ENCODE measurements at regions of chr11 and their contacts with region 1.

Region 1: GRCh38 chr11:10413268-10413667 is 41.8 kb upstream of the AMPD3 start:
- DNase-seq: peak; percentile 54
- H3K4me3 Mint-ChIP-seq: no peak overlapping the region
- H3K27ac Mint-ChIP-seq: no peak overlapping the region
- H3K4me1 Mint-ChIP-seq: peaks cover 31% of the 10 kb centered on the region
- H3K27me3 Mint-ChIP-seq: no peaks in the 10 kb centered on the region

Region 2: DNA sequence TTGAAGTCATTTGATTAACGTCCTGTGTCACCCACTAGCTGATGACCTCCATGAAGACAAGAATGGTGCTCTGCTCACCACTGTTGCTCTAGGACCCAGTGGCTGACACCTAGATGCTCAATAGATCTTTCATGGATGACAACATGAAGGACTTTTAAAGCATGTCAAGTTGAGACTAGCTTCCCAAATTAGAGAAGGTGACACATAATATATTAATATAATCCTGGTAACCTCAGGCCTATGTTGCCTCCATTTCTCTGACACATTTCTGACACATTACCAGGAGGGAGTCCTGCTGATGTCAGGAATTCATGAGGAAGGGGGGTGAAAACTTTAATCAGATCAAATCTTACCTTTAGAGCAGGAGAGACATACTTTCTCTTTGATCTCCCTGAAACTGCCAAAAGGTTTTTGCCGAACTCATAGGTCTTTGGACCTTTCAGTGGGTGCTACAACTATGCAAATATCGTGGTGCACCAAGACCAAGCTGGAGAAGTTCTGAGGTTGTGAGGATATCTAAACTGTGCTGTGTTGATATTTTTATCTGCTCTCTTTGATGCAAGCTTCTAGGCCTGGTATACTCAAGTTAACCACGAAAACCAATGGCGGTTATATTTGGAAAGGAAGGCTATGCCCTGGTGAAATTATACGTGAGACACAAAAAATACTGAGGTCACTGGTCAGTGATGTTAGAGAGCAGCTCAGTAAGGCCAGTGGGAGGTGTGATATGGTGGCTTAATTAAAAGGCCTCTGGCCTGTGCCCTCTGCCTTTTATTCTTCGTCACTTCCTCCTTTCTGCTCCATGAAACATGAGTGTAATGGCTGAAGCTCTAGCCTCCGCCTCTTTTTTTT is 28.6 kb after region 1 on chr11:
- CTCF ChIA-PET with region 1: interaction called, 8 read pairs
- POLR2A ChIA-PET with region 1: no interaction called
- intact Hi-C with region 1: loop called (anchors 1 kb)
- DNase-seq: peak; percentile 51
- H3K4me3 Mint-ChIP-seq: no peak overlapping the region
- H3K27ac Mint-ChIP-seq: peak overlapping the region; percentile 69
- H3K4me1 Mint-ChIP-seq: peaks cover 25% of the 10 kb centered on the region
- H3K27me3 Mint-ChIP-seq: no peaks in the 10 kb centered on the region